ENCODE measurements at regions of chr17 and their contacts with region 1.

Region 1: DNA sequence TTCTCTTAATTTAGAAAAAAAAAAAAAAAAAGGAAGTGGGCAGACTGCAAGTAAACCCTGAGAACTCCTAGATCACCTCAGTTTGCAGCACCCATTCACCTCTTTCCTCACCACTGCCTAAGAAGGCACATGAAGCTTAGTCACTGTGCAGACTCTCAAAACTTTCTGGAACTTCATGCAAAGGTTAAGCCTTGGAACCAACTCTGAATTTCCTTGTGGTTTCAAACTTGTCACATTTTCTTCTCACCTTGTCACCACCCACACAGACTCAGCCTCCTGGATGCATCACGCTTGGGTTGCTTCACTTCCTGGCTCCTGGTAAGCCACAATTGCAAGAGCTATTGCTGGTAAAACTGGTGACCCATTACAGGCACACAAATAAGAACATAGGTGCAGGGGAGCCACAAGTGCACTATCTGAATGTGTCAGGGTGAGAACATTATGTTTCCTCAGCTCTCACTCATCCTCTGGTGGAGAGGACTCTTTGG is 15.0 kb upstream of the CPD start:
- DNase-seq: peak; percentile 92
- ATAC-seq: peak; percentile 96
- H3K4me3 Mint-ChIP-seq: no peak overlapping the region
- H3K27ac Mint-ChIP-seq: peak overlapping the region; percentile 85
- H3K4me1 Mint-ChIP-seq: peaks cover 33% of the 10 kb centered on the region
- H3K27me3 Mint-ChIP-seq: no peaks in the 10 kb centered on the region

Region 2: DNA sequence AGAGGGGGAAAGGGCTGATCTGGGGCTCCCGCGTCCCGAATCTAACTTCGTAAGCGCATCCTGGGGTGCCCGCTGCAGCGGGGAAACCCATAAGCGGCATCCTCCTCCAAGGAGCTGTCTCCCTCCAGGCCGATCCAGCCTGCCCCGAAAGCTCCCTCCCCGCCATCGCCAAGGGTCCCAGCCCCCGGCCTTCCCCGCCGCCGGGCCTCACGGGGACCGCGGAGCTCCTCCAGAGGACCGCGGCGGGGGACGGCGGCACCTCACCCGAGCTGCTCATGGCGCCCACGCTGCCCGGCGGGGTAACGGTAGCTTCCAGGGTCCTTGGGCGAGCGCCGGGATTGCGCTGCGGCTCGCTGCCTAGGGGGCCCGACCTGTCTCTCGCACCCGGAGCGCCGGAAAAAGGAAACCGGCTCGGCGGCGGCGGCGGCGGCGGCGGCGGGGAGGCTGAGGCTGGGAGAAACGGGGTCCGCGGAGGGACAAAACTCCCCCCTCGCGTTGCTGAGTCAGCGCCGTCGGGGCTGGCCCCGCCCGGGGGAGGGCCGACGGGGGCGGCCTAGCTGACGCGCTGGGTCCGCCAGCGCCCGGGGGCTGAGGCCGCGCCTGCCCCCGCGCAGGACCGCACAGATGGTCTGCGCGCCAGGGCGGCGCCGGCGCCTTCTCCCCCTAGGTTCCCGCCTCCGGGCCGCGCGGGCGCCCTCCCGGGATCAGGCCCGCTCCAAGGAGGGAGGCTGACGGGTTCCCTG is 72.0 kb before region 1 on chr17 and contains the start of gene BLMH:
- CTCF ChIA-PET with region 1: no interaction called
- POLR2A ChIA-PET with region 1: interaction called, 9 read pairs
- intact Hi-C with region 1: loop called in 1 of 2 experiments (anchors 1 kb)
- DNase-seq: peak; percentile 90
- ATAC-seq: peak; percentile 82
- H3K4me3 Mint-ChIP-seq: peak within 1 kb of the TSS; percentile 91
- H3K27ac Mint-ChIP-seq: peak within 1 kb of the TSS; percentile 94
- H3K4me1 Mint-ChIP-seq: peaks cover 13% of the 10 kb centered on the region
- H3K27me3 Mint-ChIP-seq: no peaks in the 10 kb centered on the region
- total RNA-seq, gene BLMH: 54.3 to 74.5 TPM

Region 3: GRCh38 chr17:30323895-30324319 is 39.9 kb before region 1 on chr17:
- CTCF ChIA-PET with region 1: interaction called, 3 read pairs
- POLR2A ChIA-PET with region 1: interaction called, 3 read pairs
- intact Hi-C with region 1: loop called in 1 of 2 experiments (anchors 5 kb)
- DNase-seq: peak; percentile 72
- ATAC-seq: peak; percentile 99
- H3K4me3 Mint-ChIP-seq: no peak overlapping the region
- H3K27ac Mint-ChIP-seq: peak overlapping the region; percentile 79
- H3K4me1 Mint-ChIP-seq: peaks cover 27% of the 10 kb centered on the region
- H3K27me3 Mint-ChIP-seq: no peaks in the 10 kb centered on the region

Region 4: DNA sequence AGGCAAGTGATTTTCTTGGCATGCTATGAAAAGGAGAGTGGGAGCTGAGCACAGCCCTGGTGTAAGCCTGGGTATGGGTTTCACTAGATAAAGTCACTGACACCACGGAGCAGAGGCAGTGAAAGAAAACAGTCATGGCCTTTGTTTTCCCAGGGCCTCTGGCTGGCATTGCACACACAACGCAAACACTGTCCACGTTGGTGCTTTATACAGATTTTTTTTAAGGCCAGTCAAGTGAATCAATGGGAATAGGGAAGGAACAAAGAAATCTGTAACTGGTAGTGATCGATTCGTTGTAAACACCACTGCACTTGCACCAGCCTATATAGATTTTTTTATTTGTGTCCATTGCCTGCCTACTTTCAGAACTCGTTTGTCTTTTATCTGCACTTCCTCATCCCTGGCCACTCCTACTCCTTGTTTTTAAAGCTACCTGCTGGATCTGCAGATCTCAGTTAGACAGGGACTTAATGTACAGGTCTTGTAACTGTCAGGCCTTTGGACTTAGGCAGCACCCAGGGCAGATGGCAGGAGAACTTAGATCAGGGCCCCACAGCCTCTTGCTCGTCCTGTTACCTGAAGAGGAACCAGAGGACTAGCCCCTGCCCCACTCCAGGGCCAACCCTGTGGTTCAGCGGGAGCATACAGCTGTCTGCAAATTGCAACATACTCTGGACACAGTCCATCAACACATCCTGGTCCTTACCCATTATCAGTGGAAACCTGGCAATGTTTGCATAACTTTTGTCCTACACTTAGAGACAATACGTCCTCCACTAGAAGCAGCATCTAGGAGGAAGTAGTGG is 19.3 kb before region 1 on chr17:
- CTCF ChIA-PET with region 1: interaction called, 16 read pairs
- POLR2A ChIA-PET with region 1: interaction called, 5 read pairs
- intact Hi-C with region 1: loop called (anchors 2 kb)
- DNase-seq: no peak
- ATAC-seq: no peak
- H3K4me3 Mint-ChIP-seq: no peak overlapping the region
- H3K27ac Mint-ChIP-seq: no peak overlapping the region
- H3K4me1 Mint-ChIP-seq: peaks cover 21% of the 10 kb centered on the region
- H3K27me3 Mint-ChIP-seq: no peaks in the 10 kb centered on the region

Region 5: DNA sequence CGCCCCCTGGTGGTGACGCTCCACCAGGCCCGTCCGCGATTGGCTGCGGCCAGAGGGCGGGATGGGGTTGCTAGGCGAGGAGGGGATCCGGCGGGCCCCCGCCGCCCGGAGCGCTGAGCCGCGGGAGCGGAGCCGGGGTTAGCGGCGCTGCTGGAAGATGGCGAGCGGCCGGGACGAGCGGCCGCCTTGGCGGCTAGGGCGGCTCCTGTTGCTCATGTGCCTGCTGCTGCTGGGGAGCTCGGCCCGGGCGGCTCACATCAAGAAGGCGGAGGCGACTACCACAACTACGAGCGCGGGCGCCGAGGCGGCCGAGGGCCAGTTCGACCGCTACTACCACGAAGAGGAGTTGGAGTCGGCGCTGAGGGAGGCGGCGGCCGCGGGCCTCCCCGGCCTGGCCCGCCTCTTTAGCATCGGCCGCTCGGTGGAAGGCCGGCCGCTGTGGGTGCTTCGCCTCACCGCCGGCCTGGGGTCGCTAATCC is 15.1 kb after region 1 on chr17 and contains the start of gene CPD:
- CTCF ChIA-PET with region 1: interaction called, 10 read pairs
- POLR2A ChIA-PET with region 1: interaction called, 4 read pairs
- intact Hi-C with region 1: loop called (anchors 1 kb)
- DNase-seq: peak; percentile 98
- ATAC-seq: peak; percentile 87
- H3K4me3 Mint-ChIP-seq: peak within 1 kb of the TSS; percentile 82
- H3K27ac Mint-ChIP-seq: peak within 1 kb of the TSS; percentile 80
- H3K4me1 Mint-ChIP-seq: peaks cover 63% of the 10 kb centered on the region
- H3K27me3 Mint-ChIP-seq: no peaks in the 10 kb centered on the region
- total RNA-seq, gene CPD: 29.0 to 36.3 TPM

Region 6: GRCh38 chr17:30395398-30396022 is 31.8 kb after region 1 on chr17:
- CTCF ChIA-PET with region 1: no interaction called
- POLR2A ChIA-PET with region 1: no interaction called
- intact Hi-C with region 1: no loop called
- DNase-seq: no peak
- ATAC-seq: no peak
- H3K4me3 Mint-ChIP-seq: no peak overlapping the region
- H3K27ac Mint-ChIP-seq: no peak overlapping the region
- H3K4me1 Mint-ChIP-seq: peaks cover 20% of the 10 kb centered on the region
- H3K27me3 Mint-ChIP-seq: no peaks in the 10 kb centered on the region

Region 7: GRCh38 chr17:30413109-30413508 is 49.4 kb after region 1 on chr17:
- CTCF ChIA-PET with region 1: interaction called, 3 read pairs
- POLR2A ChIA-PET with region 1: interaction called, 3 read pairs
- intact Hi-C with region 1: loop called (anchors 1 to 2 kb)
- DNase-seq: no peak
- ATAC-seq: peak; percentile 97
- H3K4me3 Mint-ChIP-seq: no peak overlapping the region
- H3K27ac Mint-ChIP-seq: peak overlapping the region; percentile 84
- H3K4me1 Mint-ChIP-seq: peaks cover 53% of the 10 kb centered on the region
- H3K27me3 Mint-ChIP-seq: no peaks in the 10 kb centered on the region

Measured in activated CD4-positive, alpha-beta T cell treated with anti-CD3 and anti-CD28 coated beads for 36 hours (primary cell).